Activated CD4-positive, alpha-beta T cell treated with anti-CD3 and anti-CD28 coated beads for 36 hours (primary cell): ENCODE measurements at regions of chr5 and their contacts with region 1.

Region 1: GRCh38 chr5:157026789-157027424 is 32.0 kb downstream of the HAVCR1 start:
- DNase-seq: peak; percentile 32
- ATAC-seq: no peak
- H3K4me3 Mint-ChIP-seq: no peak overlapping the region
- H3K27ac Mint-ChIP-seq: no peak overlapping the region
- H3K4me1 Mint-ChIP-seq: peaks cover 36% of the 10 kb centered on the region
- H3K27me3 Mint-ChIP-seq: no peaks in the 10 kb centered on the region

Region 2: DNA sequence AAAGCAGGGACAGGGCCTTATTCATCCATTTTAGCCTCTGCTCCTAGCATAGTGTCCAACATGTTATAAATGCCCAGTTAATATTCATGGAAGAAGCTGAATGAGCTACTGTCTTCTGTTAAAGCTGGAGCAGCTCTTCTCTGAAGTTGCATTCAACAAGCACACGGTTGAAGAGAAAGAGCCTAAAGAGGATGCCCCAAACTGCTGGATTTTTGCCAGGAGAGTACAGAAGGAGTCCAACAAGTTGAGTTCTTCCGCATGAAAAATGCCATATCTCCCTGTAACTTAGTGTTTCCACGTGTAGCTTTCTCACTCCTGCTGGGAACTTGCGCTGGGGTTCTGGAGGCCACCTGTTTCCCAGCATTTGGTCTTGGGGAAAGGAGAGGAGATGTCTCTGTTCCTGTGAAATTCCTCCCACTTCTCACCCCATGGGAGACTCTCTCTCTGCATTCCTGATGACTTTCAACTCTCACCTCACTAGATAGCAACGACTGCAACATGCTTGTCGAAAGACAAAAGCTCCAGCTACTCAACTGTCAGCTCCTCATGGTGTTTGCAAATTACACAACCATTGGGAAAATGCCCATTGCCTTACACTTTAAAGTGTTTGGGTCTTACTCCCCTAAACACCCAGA is 1890.6 kb before region 1 on chr5:
- CTCF ChIA-PET with region 1: no interaction called
- POLR2A ChIA-PET with region 1: no interaction called
- intact Hi-C with region 1: loop called in 1 of 2 experiments (anchors 5 kb)
- DNase-seq: no peak
- ATAC-seq: no peak
- H3K4me3 Mint-ChIP-seq: no peak overlapping the region
- H3K27ac Mint-ChIP-seq: no peak overlapping the region
- H3K4me1 Mint-ChIP-seq: no peaks in the 10 kb centered on the region
- H3K27me3 Mint-ChIP-seq: peaks cover 28% of the 10 kb centered on the region

Region 3: GRCh38 chr5:155616779-155617392 is 1410.0 kb before region 1 on chr5:
- CTCF ChIA-PET with region 1: no interaction called
- POLR2A ChIA-PET with region 1: no interaction called
- intact Hi-C with region 1: loop called in 1 of 2 experiments (anchors 5 kb)
- DNase-seq: peak; percentile 72
- ATAC-seq: peak; percentile 39
- H3K4me3 Mint-ChIP-seq: no peak overlapping the region
- H3K27ac Mint-ChIP-seq: no peak overlapping the region
- H3K4me1 Mint-ChIP-seq: no peaks in the 10 kb centered on the region
- H3K27me3 Mint-ChIP-seq: peaks cover 16% of the 10 kb centered on the region

Region 4: GRCh38 chr5:156444753-156445291 is 582.1 kb before region 1 on chr5:
- CTCF ChIA-PET with region 1: no interaction called
- POLR2A ChIA-PET with region 1: no interaction called
- intact Hi-C with region 1: no loop called
- DNase-seq: no peak
- ATAC-seq: no peak
- H3K4me3 Mint-ChIP-seq: no peak overlapping the region
- H3K27ac Mint-ChIP-seq: no peak overlapping the region
- H3K4me1 Mint-ChIP-seq: no peaks in the 10 kb centered on the region
- H3K27me3 Mint-ChIP-seq: peaks cover 29% of the 10 kb centered on the region

Region 5: DNA sequence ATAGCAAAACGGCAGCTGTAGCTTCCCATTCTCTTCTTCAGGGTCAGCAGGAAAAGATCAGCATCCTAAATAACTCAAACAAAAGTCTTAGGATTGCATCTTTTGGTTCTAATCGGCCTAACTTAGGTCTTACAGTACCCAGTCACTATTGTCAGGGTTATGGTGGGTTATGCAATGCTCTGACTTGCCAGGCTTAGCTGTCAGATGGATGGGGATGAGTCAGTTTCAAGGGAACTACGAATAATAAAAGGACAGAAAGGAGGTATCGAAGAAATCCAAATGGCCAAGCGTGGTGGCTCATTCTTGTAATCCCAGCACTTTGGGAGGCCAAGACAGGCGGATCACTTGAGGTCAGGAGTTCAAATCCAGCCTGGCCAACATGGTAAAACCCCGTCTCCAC is 130.4 kb before region 1 on chr5:
- CTCF ChIA-PET with region 1: no interaction called
- POLR2A ChIA-PET with region 1: no interaction called
- intact Hi-C with region 1: no loop called
- DNase-seq: no peak
- ATAC-seq: no peak
- H3K4me3 Mint-ChIP-seq: no peak overlapping the region
- H3K27ac Mint-ChIP-seq: no peak overlapping the region
- H3K4me1 Mint-ChIP-seq: peaks cover 21% of the 10 kb centered on the region
- H3K27me3 Mint-ChIP-seq: no peaks in the 10 kb centered on the region

Region 6: DNA sequence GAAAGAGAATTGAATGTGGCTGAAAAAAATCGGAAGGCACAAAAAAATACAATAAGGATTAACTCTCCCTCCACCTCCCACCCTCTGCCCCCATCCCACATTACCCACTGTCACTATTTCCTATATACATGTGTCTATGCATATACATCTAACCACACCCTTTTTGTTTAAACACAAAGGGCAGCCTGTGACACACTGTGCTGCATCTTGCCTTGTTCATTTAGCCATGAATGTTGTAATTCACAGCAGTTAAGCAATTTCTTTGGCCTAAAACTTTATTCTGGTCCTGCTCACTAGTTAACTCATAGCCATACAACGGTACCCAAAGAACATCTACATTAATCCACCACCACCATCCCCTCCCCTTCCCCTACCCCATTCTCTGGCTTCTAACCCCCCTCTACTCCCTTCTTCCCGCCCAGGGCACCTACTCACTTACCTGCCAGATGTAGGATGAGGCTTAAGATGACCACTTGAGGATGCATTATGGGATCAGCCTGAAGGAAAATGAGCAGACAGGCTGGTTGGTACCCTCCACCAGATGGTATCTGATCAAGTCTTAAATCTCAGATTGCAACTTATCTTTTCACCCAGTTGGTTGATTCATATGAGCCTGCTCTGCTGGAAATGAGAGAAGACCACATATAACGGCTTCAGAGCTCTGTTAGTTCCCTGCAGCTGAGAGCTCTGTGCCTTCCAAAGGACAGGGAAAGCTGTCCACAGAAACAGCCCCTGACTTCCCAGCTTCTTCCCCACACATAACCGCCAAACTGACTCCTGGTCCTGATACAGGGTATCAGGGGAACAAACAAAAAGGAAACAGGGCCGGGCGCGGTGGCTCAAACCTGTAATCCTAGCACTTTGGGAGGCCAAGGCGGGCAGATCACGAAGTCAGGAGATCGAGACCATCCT is 30.8 kb after region 1 on chr5:
- CTCF ChIA-PET with region 1: no interaction called
- POLR2A ChIA-PET with region 1: no interaction called
- intact Hi-C with region 1: no loop called
- DNase-seq: no peak
- ATAC-seq: no peak
- H3K4me3 Mint-ChIP-seq: no peak overlapping the region
- H3K27ac Mint-ChIP-seq: no peak overlapping the region
- H3K4me1 Mint-ChIP-seq: no peaks in the 10 kb centered on the region
- H3K27me3 Mint-ChIP-seq: no peaks in the 10 kb centered on the region

Region 7: GRCh38 chr5:157076558-157076957 is 49.7 kb after region 1 on chr5:
- CTCF ChIA-PET with region 1: interaction called, 3 read pairs
- POLR2A ChIA-PET with region 1: no interaction called
- intact Hi-C with region 1: loop called in 1 of 2 experiments (anchors 10 kb)
- DNase-seq: peak; percentile 26
- ATAC-seq: peak; percentile 60
- H3K4me3 Mint-ChIP-seq: no peak overlapping the region
- H3K27ac Mint-ChIP-seq: no peak overlapping the region
- H3K4me1 Mint-ChIP-seq: peaks cover 20% of the 10 kb centered on the region
- H3K27me3 Mint-ChIP-seq: no peaks in the 10 kb centered on the region

Region 8: GRCh38 chr5:157100140-157100679 is 73.3 kb after region 1 on chr5:
- CTCF ChIA-PET with region 1: no interaction called
- POLR2A ChIA-PET with region 1: no interaction called
- intact Hi-C with region 1: loop called (anchors 1 kb)
- DNase-seq: peak; percentile 65
- ATAC-seq: peak; percentile 91
- H3K4me3 Mint-ChIP-seq: peak overlapping the region; percentile 28
- H3K27ac Mint-ChIP-seq: peak overlapping the region; percentile 96
- H3K4me1 Mint-ChIP-seq: peaks cover 27% of the 10 kb centered on the region
- H3K27me3 Mint-ChIP-seq: no peaks in the 10 kb centered on the region

Region 9: GRCh38 chr5:157108976-157109375 is 82.1 kb after region 1 on chr5 and contains the start of gene HAVCR2:
- CTCF ChIA-PET with region 1: no interaction called
- POLR2A ChIA-PET with region 1: interaction called, 3 read pairs
- intact Hi-C with region 1: loop called in 1 of 2 experiments (anchors 2 kb)
- DNase-seq: peak; percentile 82
- ATAC-seq: peak; percentile 96
- H3K4me3 Mint-ChIP-seq: peak within 1 kb of the TSS; percentile 65
- H3K27ac Mint-ChIP-seq: peak within 1 kb of the TSS; percentile 97
- H3K4me1 Mint-ChIP-seq: peaks cover 45% of the 10 kb centered on the region
- H3K27me3 Mint-ChIP-seq: no peaks in the 10 kb centered on the region
- total RNA-seq, gene HAVCR2: 12.6 to 15.9 TPM